RWPE1 (cell line): ENCODE measurements at regions of chr2 and their contacts with region 1.

Region 1: GRCh38 chr2:140586379-140586778 is 1544.4 kb downstream of the LRP1B start:
- DNase-seq: peak; percentile 27
- H3K27ac ChIP-seq: no peak overlapping the region
- CTCF ChIP-seq: no peak

Region 2: GRCh38 chr2:140643761-140644187 is 57.4 kb after region 1 on chr2:
- CTCF ChIA-PET with region 1: interaction called, 10 read pairs
- POLR2A ChIA-PET with region 1: no interaction called
- DNase-seq: peak; percentile 25
- H3K27ac ChIP-seq: no peak overlapping the region
- CTCF ChIP-seq: no peak